Activated CD4-positive, alpha-beta T cell treated with anti-CD3 and anti-CD28 coated beads for 36 hours (primary cell): ENCODE measurements at regions of chr19 and their contacts with region 1.

Region 1: DNA sequence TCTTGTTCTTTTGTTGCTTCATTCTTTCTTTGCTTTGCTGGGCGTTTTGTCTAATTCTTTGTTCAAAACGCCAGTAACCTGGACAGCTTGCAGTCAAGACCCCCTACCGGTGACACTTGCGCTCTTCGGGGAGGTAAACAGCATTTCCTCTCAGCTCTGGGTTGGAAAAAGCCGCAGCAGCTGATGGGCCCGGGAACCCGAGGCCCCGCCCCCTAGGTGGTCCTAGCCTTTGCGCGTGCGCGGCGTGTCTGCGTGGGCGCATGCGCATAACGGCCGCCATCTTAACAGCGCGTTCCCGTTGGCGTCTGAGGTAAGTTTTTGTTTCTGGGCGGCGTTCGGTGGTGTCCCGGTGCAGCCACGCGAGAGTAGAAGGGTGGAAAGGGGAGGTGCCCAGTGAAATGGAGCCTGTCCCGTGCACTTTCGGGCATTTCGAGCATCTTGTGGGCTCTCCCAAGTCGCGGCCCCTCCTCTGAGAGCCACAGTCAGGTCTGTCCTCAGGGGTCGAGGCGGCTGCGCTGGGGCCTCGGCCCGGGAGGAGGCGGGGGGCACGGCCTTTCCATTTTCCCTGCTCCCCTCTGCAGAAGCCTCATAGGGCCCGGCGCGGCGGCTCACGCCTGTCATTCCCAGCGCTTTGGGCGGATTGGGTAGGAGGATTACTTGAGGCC is at the start of gene ZNF559:
- DNase-seq: peak; percentile 97
- ATAC-seq: peak; percentile 99
- H3K4me3 Mint-ChIP-seq: peak within 1 kb of the TSS; percentile 84
- H3K27ac Mint-ChIP-seq: peak within 1 kb of the TSS; percentile 96
- H3K4me1 Mint-ChIP-seq: peaks cover 23% of the 10 kb centered on the region
- H3K27me3 Mint-ChIP-seq: no peaks in the 10 kb centered on the region
- total RNA-seq, gene ZNF559: 11.7 to 13.0 TPM

Region 2: GRCh38 chr19:9189538-9189937 is 134.5 kb before region 1 on chr19:
- CTCF ChIA-PET with region 1: no interaction called
- POLR2A ChIA-PET with region 1: no interaction called
- intact Hi-C with region 1: no loop called
- DNase-seq: no peak
- ATAC-seq: no peak
- H3K4me3 Mint-ChIP-seq: no peak overlapping the region
- H3K27ac Mint-ChIP-seq: no peak overlapping the region
- H3K4me1 Mint-ChIP-seq: no peaks in the 10 kb centered on the region
- H3K27me3 Mint-ChIP-seq: peaks cover 24% of the 10 kb centered on the region

Region 3: DNA sequence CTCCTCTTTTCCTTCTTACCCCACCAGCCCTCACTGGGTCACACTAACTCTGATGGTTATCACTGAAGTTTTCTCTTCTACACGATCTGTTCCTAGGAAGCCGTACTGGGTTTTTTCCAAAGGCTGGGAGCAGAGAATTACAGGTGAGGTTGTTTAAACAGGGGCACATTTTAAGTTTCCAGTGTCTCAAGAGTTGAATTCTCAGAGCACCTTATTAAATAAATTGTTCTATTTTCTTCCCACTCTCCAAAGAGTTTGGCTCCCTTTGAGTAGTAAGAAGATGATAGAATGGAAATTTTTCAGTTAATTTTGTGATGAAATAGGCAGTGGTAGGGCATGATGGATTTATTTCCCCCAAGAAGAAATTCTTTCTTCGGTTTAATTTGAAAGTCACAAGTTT is 104.6 kb before region 1 on chr19 and contains the start of gene OR7D4:
- CTCF ChIA-PET with region 1: no interaction called
- POLR2A ChIA-PET with region 1: no interaction called
- intact Hi-C with region 1: no loop called
- DNase-seq: no peak
- ATAC-seq: no peak
- H3K4me3 Mint-ChIP-seq: no peak within 1 kb of the TSS
- H3K27ac Mint-ChIP-seq: no peak within 1 kb of the TSS
- H3K4me1 Mint-ChIP-seq: no peaks in the 10 kb centered on the region
- H3K27me3 Mint-ChIP-seq: peaks cover 9% of the 10 kb centered on the region
- total RNA-seq, gene OR7D4: not detected

Region 4: GRCh38 chr19:9406798-9407352 is 82.8 kb after region 1 on chr19:
- CTCF ChIA-PET with region 1: no interaction called
- POLR2A ChIA-PET with region 1: no interaction called
- intact Hi-C with region 1: loop called in 1 of 2 experiments (anchors 1 kb)
- DNase-seq: peak; percentile 82
- ATAC-seq: peak; percentile 80
- H3K4me3 Mint-ChIP-seq: peak overlapping the region; percentile 70
- H3K27ac Mint-ChIP-seq: peak overlapping the region; percentile 60
- H3K4me1 Mint-ChIP-seq: peaks cover 18% of the 10 kb centered on the region
- H3K27me3 Mint-ChIP-seq: no peaks in the 10 kb centered on the region

Region 5: GRCh38 chr19:9584073-9584833 is 260.2 kb after region 1 on chr19 and contains the start of gene ZNF121:
- CTCF ChIA-PET with region 1: no interaction called
- POLR2A ChIA-PET with region 1: no interaction called
- intact Hi-C with region 1: loop called (anchors 1 to 10 kb)
- DNase-seq: peak; percentile 91
- ATAC-seq: peak; percentile 82
- H3K4me3 Mint-ChIP-seq: peak within 1 kb of the TSS; percentile 93
- H3K27ac Mint-ChIP-seq: peak within 1 kb of the TSS; percentile 94
- H3K4me1 Mint-ChIP-seq: peaks cover 29% of the 10 kb centered on the region
- H3K27me3 Mint-ChIP-seq: peaks cover 4% of the 10 kb centered on the region
- total RNA-seq, gene ZNF121: 71.4 to 75.3 TPM

Region 6: DNA sequence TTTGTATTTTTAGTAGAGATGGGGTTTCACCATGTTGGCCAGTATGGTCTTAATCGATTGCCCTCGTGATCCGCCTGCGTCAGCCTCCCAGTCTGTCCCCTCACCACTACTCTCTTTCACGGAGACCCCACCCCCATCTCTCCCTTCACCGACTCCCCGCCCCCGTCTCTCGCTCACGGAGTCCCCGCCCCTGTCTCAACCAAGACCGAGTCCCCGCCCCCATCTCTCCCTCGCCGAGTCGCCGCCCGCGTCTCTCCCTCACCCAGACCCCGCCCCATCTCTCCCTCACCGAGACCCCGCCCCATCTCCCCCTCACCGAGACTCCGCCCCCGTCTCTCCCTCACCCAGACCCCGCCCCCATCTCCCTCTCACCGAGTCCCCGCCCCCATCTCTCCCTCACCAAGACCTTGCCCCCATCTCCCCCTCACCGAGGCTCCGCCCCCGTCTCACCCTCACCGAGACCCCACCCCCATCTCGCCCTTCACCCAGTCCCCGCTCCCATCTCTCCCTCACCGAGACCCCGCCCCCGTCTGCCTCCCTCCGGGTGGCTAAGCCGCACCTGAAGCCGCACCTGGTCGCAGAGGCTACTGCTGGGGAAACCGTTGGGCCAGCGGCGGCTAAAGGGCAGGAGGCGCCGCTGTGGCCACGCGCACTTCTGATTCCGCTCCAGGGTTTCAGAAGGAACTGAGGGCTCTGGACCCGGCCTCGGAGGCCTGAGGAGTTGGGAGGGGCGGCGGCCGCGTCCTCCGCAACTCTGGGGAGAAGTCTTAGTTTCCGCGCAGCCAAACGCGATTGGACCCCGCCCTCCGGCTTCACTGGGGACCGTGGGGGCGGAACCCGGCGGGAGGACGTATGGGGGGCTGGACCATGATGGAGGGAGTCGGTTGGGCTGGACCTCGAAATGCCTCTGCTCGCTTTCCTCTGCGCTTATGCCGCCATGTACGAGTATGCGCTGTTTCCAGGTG is 461.6 kb after region 1 on chr19:
- CTCF ChIA-PET with region 1: no interaction called
- POLR2A ChIA-PET with region 1: no interaction called
- intact Hi-C with region 1: loop called (anchors 1 to 10 kb)
- DNase-seq: peak; percentile 100
- ATAC-seq: peak; percentile 89
- H3K4me3 Mint-ChIP-seq: peak overlapping the region; percentile 84
- H3K27ac Mint-ChIP-seq: peak overlapping the region; percentile 98
- H3K4me1 Mint-ChIP-seq: peaks cover 26% of the 10 kb centered on the region
- H3K27me3 Mint-ChIP-seq: no peaks in the 10 kb centered on the region